ENCODE measurements at regions of chr12 and their contacts with region 1.

Region 1: DNA sequence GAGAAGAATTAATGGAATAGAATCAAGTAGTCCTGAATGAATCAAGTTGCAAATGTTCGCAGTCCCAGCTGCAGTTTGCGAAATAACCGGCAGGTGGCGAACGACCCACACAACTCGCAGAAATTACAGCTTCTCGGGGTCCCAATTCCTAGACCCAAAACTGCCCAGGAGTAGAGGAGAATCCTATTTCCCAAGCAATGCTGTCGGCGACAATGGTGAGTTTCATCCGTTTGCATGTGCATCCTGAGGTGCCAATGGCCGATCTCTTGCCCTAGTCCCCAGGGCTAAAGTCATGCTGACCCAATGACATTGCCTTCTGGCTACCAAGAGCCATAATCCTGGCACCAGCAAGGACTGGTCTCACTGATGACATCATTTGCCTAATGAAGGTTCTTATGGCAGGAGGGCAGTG is 8.5 kb upstream of the ASCL1 start:
- H3K4me3 ChIP-seq: no peak overlapping the region
- H3K27ac ChIP-seq: no peak overlapping the region
- H3K4me1 ChIP-seq: no peaks in the 10 kb centered on the region
- CTCF ChIP-seq: peak; percentile 25; the same call in 1 of the 2 replicates

Region 2: DNA sequence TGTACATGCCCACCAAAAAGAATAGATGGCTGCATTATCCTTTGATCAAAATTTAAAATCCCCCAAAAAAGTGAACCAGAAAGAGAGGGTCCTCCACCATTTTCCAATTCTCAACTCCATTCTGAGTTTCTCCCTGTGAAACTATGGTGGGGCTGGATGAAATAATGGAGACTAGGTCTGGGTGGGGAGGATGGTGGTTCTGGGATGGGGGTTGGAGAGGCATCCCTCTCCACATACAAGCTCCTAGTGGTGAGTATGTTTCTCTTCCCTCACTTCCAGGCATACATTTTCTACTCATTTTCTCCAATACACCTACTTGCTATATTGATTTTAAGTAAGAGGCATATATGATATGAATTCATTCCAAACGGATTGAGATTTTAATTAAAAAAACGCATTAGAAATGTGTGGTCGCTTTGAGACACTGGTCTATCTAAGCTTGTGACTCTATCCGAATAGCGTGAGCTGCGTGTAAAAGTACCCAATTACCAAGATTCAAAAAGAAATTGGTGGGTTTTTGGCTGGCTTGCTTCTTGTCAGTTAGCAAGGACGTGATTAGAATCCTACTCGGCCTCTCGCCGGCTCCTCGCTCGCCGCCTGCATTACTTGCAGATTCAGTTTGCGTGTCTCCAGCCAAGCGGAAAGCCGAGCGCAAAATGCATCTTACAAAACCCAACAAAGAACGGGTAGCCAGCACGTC is 12.0 kb after region 1 on chr12:
- CTCF ChIA-PET with region 1: interaction called, 10 read pairs
- POLR2A ChIA-PET with region 1: no interaction called
- H3K4me3 ChIP-seq: no peak overlapping the region
- H3K27ac ChIP-seq: no peak overlapping the region
- H3K4me1 ChIP-seq: no peaks in the 10 kb centered on the region
- CTCF ChIP-seq: no peak

Region 3: DNA sequence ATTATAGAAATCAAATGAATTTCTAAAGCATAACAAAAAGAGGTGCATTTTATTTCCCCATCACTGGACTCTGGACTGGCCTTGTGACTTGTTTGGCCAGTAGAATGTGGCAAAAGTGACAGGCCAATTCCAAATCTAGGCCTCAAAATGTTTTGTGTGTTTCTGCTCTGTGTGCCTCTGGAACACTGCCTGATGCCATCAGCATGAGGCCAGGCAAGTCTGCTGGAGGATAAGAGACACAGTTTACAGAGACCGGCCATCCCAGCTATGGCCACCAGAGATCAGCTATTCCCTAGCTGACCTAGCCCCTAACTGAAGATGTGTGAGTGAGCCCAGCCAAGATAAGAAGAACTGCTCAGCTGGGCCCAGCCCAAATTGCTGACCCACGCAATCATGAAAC is 41.5 kb after region 1 on chr12:
- CTCF ChIA-PET with region 1: no interaction called
- POLR2A ChIA-PET with region 1: no interaction called
- H3K4me3 ChIP-seq: no peak overlapping the region
- H3K27ac ChIP-seq: no peak overlapping the region
- H3K4me1 ChIP-seq: no peaks in the 10 kb centered on the region
- CTCF ChIP-seq: no peak

Region 4: DNA sequence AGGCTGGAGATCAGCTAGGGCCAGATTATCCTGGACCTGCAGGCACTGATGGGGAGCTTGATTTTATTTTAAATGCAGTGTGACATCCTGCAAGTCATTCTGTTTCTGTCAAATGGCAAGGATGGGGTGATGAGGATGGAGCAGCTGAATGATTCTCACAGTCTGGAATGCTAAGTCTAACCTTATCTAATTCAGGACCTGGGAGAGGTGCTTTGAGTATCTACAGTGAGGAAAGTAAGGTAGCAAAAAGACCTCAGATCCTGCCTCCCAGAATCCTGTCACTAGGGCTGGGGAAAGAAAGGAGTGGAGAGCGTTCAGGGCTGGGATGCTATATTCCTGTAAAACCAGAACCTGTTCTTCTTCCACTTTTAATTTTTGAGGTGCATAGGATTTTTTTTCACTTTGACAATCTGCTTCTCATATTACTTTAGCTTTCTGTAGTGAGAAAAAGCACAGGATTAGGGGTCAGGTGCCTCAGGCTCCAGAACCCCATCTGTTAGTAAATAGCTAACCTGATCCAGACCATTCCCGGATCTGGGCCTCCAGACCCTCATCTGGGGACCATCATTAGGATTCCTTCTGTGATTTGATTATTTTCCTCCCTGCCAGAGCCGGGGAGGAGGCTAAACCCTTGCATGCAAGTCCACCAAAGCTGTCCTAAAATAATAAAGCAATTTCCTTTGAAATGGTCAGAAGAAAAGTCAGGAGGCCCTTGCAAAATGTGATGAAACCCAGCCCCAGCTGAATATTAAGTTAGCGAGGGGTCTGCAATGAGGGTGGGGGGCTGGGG is 63.2 kb after region 1 on chr12:
- CTCF ChIA-PET with region 1: interaction called, 10 read pairs
- POLR2A ChIA-PET with region 1: no interaction called
- H3K4me3 ChIP-seq: no peak overlapping the region
- H3K27ac ChIP-seq: no peak overlapping the region
- H3K4me1 ChIP-seq: no peaks in the 10 kb centered on the region
- CTCF ChIP-seq: no peak

Region 5: DNA sequence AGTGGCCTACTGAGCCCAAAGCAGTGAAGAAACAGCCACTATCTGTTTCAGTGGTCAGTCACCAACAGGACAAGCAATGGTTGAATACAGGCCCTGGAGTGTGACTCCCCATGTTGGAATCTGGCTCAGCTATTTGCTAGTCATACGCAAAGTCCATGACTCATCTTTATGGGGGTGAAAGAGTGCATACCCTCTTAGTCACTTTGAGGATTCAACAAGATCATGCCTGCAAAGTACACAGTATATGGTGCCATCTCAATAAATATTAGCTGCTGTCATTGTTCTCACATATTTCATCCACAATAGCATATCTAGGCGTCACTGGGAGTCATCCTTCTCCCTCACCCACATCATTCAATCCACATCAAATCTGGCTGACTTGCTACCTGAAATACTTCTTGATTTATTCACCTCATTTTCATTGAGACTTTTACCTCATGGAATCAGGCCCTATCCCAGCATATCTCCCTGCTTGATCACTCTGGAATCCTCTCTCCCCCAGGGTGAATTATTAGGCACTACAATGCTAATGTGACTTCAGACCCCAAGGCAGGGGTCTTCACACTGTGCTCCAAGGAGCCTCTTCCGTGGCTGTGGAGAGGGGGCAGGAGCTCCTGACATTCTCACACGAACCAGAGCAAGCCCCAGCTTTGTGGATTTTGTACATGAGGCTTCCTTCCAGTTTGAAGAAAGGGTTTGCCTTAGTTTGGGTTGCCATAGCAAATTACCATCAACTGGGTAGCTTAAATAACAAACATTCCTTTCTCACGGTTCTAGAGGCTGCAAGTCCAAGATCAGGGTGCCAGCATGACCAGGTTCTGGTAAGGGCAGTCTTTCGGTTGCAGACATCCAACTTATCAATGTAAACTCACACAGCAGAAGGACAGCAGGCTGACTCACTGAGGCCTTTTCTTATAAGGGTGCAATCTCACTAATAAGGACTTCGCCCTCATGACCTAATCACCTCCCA is 611.9 kb after region 1 on chr12:
- CTCF ChIA-PET with region 1: no interaction called
- POLR2A ChIA-PET with region 1: no interaction called
- H3K4me3 ChIP-seq: no peak overlapping the region
- H3K27ac ChIP-seq: no peak overlapping the region
- H3K4me1 ChIP-seq: no peaks in the 10 kb centered on the region
- CTCF ChIP-seq: no peak